Activated CD4-positive, alpha-beta T cell treated with anti-CD3 and anti-CD28 coated beads for 36 hours (primary cell): ENCODE measurements at regions of chr19 and their contacts with region 1.

Region 1: GRCh38 chr19:19597809-19598306 is 20.6 kb downstream of the PBX4 start:
- DNase-seq: peak; percentile 70
- ATAC-seq: peak; percentile 66
- H3K4me3 Mint-ChIP-seq: peak overlapping the region; percentile 67
- H3K27ac Mint-ChIP-seq: peak overlapping the region; percentile 97
- H3K4me1 Mint-ChIP-seq: peaks cover 82% of the 10 kb centered on the region
- H3K27me3 Mint-ChIP-seq: no peaks in the 10 kb centered on the region

Region 2: GRCh38 chr19:19618219-19619051 is 20.6 kb after region 1 on chr19 and contains the start of gene PBX4:
- CTCF ChIA-PET with region 1: interaction called, 6 read pairs
- POLR2A ChIA-PET with region 1: interaction called, 3 read pairs
- intact Hi-C with region 1: loop called (anchors 1 to 2 kb)
- DNase-seq: peak; percentile 99
- ATAC-seq: peak; percentile 93
- H3K4me3 Mint-ChIP-seq: peak within 1 kb of the TSS; percentile 91
- H3K27ac Mint-ChIP-seq: peak within 1 kb of the TSS; percentile 90
- H3K4me1 Mint-ChIP-seq: peaks cover 46% of the 10 kb centered on the region
- H3K27me3 Mint-ChIP-seq: no peaks in the 10 kb centered on the region
- total RNA-seq, gene PBX4: 19.4 to 21.2 TPM

Region 3: GRCh38 chr19:19627621-19628500 is 30.0 kb after region 1 on chr19 and contains the start of gene LPAR2:
- CTCF ChIA-PET with region 1: interaction called, 6 read pairs
- POLR2A ChIA-PET with region 1: interaction called, 3 read pairs
- intact Hi-C with region 1: loop called (anchors 1 to 5 kb)
- DNase-seq: peak; percentile 81
- ATAC-seq: peak; percentile 74
- H3K4me3 Mint-ChIP-seq: peak within 1 kb of the TSS; percentile 80
- H3K27ac Mint-ChIP-seq: peak within 1 kb of the TSS; percentile 79
- H3K4me1 Mint-ChIP-seq: peaks cover 23% of the 10 kb centered on the region
- H3K27me3 Mint-ChIP-seq: no peaks in the 10 kb centered on the region
- total RNA-seq, gene LPAR2: 21.6 to 33.2 TPM

Region 4: GRCh38 chr19:19745496-19746285 is 147.8 kb after region 1 on chr19:
- CTCF ChIA-PET with region 1: no interaction called
- POLR2A ChIA-PET with region 1: no interaction called
- intact Hi-C with region 1: no loop called
- DNase-seq: peak; percentile 36
- ATAC-seq: peak; percentile 73
- H3K4me3 Mint-ChIP-seq: no peak overlapping the region
- H3K27ac Mint-ChIP-seq: no peak overlapping the region
- H3K4me1 Mint-ChIP-seq: no peaks in the 10 kb centered on the region
- H3K27me3 Mint-ChIP-seq: no peaks in the 10 kb centered on the region

Region 5: DNA sequence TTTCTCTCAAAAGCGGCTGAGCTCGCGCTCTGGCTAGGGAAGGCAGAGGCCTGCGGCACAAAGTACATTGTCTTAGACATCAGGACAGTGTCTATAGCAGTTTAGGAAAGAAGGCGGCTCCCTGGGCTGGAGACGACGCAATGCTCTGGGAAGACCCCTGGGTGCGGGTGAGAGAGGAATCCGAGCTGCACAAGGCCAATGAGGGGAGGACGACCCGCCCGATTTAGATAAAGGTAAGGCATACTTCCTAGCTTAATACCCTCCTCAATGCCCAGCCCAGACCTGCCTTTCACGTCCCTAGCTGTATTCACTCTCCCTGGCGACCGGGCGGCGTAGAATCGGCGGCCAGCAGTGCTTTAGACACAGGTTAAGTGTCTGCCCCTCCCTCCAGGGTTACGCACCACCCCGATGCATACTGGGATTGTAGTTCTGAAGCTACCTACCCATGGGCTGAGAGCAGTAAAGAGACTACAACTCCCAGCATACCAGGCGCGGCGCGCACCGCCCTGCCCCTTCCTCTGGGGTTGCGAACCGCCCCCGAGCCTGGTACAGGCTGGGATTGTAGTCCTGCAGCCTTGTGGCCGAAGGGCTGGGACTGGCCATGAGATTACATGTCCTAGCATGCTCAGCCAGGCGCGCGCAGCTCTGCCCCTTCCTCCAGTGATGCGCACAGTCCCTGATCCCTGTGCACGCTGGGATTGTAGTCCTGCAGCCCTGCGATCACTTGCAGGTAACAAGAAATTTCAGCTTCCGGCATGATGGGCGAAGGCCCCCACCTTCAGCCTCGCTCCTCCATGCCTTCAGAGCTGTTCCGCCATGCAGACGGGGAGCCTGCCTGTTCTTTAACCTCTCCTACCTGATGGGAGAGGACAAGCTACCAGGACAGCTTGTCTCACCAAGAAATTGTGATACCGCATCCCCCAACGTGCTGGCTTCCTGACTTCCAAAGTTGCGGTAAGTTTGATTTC is 178.5 kb after region 1 on chr19:
- CTCF ChIA-PET with region 1: no interaction called
- POLR2A ChIA-PET with region 1: no interaction called
- intact Hi-C with region 1: loop called in 1 of 2 experiments (anchors 5 kb)
- DNase-seq: peak; percentile 96
- ATAC-seq: peak; percentile 99
- H3K4me3 Mint-ChIP-seq: peak overlapping the region; percentile 98
- H3K27ac Mint-ChIP-seq: peak overlapping the region; percentile 85
- H3K4me1 Mint-ChIP-seq: peaks cover 37% of the 10 kb centered on the region
- H3K27me3 Mint-ChIP-seq: no peaks in the 10 kb centered on the region

Region 6: GRCh38 chr19:19865739-19866481 is 268.1 kb after region 1 on chr19 and contains the start of gene ZNF253:
- CTCF ChIA-PET with region 1: no interaction called
- POLR2A ChIA-PET with region 1: no interaction called
- intact Hi-C with region 1: loop called in 1 of 2 experiments (anchors 5 kb)
- DNase-seq: peak; percentile 98
- ATAC-seq: peak; percentile 93
- H3K4me3 Mint-ChIP-seq: peak within 1 kb of the TSS; percentile 88
- H3K27ac Mint-ChIP-seq: peak within 1 kb of the TSS; percentile 98
- H3K4me1 Mint-ChIP-seq: peaks cover 21% of the 10 kb centered on the region
- H3K27me3 Mint-ChIP-seq: no peaks in the 10 kb centered on the region
- total RNA-seq, gene ZNF253: 16.1 to 25.1 TPM